ENCODE measurements at regions of chr6 and their contacts with region 1.

Region 1: GRCh38 chr6:134063966-134064445 is 11.6 kb upstream of the SLC2A12 start:
- DNase-seq: no peak
- H3K4me3 ChIP-seq: no peak overlapping the region
- H3K27ac ChIP-seq: no peak overlapping the region
- H3K4me1 ChIP-seq: peaks cover 2 to 12% (median 10%) of the 10 kb centered on the region in 4 experiments; a peak in 6 of 7 replicates
- H3K27me3 ChIP-seq: no peaks in the 10 kb centered on the region
- CTCF ChIP-seq: peak; percentile 61 to 97 (median 94)
- EP300 ChIP-seq: no peak
- POLR2A ChIP-seq: no peak
- RAD21 ChIP-seq: peak; percentile 75 to 83

Region 2: DNA sequence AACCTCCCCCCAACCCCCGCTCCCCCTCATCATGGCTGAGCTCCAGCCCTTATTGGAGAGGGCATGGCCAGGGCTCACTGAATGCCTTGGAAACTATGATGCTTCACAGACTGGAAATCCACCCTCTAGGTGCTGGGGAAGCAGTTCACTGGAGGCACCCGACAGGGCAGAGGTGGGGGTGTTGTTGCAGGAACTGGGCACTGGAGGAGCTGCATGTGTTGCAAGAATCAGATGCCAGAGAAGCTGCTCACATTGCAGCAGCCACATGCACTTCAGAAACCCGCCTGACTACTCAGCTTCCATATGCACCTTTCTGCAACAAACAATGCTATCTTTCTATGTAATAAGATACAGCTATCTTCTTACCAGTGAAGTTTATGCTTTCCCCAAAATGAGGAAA is 118.8 kb before region 1 on chr6:
- CTCF ChIA-PET with region 1: interaction called, 22 read pairs
- POLR2A ChIA-PET with region 1: no interaction called
- DNase-seq: no peak
- H3K4me3 ChIP-seq: no peak overlapping the region
- H3K27ac ChIP-seq: no peak overlapping the region
- H3K4me1 ChIP-seq: no peaks in the 10 kb centered on the region; a peak in 1 of 7 replicates
- H3K27me3 ChIP-seq: no peaks in the 10 kb centered on the region
- CTCF ChIP-seq: peak in 2 of 3 experiments; percentile 15 to 23; a peak in 2 of 4 replicates
- EP300 ChIP-seq: no peak
- POLR2A ChIP-seq: no peak
- RAD21 ChIP-seq: no peak

Region 3: GRCh38 chr6:133966654-133967329 is 97.2 kb before region 1 on chr6:
- CTCF ChIA-PET with region 1: interaction called, 50 read pairs
- POLR2A ChIA-PET with region 1: no interaction called
- DNase-seq: no peak
- H3K4me3 ChIP-seq: no peak overlapping the region
- H3K27ac ChIP-seq: no peak overlapping the region
- H3K4me1 ChIP-seq: peaks cover 0 to 3% (median 1%) of the 10 kb centered on the region in 4 experiments; a peak in 2 of 7 replicates
- H3K27me3 ChIP-seq: no peaks in the 10 kb centered on the region
- CTCF ChIP-seq: no peak
- EP300 ChIP-seq: no peak
- POLR2A ChIP-seq: no peak
- RAD21 ChIP-seq: no peak

Region 4: GRCh38 chr6:133991096-133991593 is 72.9 kb before region 1 on chr6:
- CTCF ChIA-PET with region 1: interaction called, 31 read pairs
- POLR2A ChIA-PET with region 1: interaction called, 4 read pairs
- DNase-seq: no peak
- H3K4me3 ChIP-seq: no peak overlapping the region
- H3K27ac ChIP-seq: no peak overlapping the region
- H3K4me1 ChIP-seq: peaks cover 0 to 6% (median 3%) of the 10 kb centered on the region in 4 experiments; a peak in 2 of 7 replicates
- H3K27me3 ChIP-seq: no peaks in the 10 kb centered on the region
- CTCF ChIP-seq: no peak
- EP300 ChIP-seq: no peak
- POLR2A ChIP-seq: no peak
- RAD21 ChIP-seq: no peak

Region 5: GRCh38 chr6:134021396-134022122 is 42.4 kb before region 1 on chr6:
- CTCF ChIA-PET with region 1: interaction called, 17 read pairs
- POLR2A ChIA-PET with region 1: interaction called, 4 read pairs
- DNase-seq: no peak
- H3K4me3 ChIP-seq: no peak overlapping the region
- H3K27ac ChIP-seq: no peak overlapping the region
- H3K4me1 ChIP-seq: 0 out of 7 replicates have a peak, but pooled peaks cover 0 to 2% (median 0%) of the 10 kb centered on the region in 4 experiments
- H3K27me3 ChIP-seq: no peaks in the 10 kb centered on the region; a peak in 1 of 7 replicates
- CTCF ChIP-seq: no peak
- EP300 ChIP-seq: no peak
- POLR2A ChIP-seq: no peak
- RAD21 ChIP-seq: no peak

Region 6: DNA sequence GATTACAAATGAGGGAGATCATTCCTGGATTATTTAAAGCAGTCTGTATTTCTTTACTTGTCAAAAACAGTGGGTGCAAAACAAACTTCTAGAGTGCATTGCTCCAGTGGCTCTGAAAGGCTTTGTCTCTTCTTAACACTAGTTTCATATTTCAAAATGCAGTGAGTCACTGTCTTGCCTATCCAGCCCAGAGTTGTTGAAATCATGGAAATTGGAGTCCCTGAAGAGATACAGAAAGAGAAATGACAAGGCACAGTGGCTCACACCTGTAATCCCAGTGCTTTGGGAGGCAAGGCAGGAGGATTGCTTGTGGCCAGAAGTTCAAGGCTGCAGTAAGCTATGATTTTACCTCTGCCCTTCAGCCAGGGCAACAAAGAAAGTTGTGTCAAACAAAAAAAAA is 22.9 kb before region 1 on chr6:
- CTCF ChIA-PET with region 1: interaction called, 144 read pairs
- POLR2A ChIA-PET with region 1: no interaction called
- DNase-seq: no peak
- H3K4me3 ChIP-seq: no peak overlapping the region
- H3K27ac ChIP-seq: no peak overlapping the region
- H3K4me1 ChIP-seq: peaks cover 0 to 2% (median 0%) of the 10 kb centered on the region in 4 experiments; a peak in 2 of 7 replicates
- H3K27me3 ChIP-seq: no peaks in the 10 kb centered on the region
- CTCF ChIP-seq: no peak
- EP300 ChIP-seq: no peak
- POLR2A ChIP-seq: no peak
- RAD21 ChIP-seq: no peak

Region 7: DNA sequence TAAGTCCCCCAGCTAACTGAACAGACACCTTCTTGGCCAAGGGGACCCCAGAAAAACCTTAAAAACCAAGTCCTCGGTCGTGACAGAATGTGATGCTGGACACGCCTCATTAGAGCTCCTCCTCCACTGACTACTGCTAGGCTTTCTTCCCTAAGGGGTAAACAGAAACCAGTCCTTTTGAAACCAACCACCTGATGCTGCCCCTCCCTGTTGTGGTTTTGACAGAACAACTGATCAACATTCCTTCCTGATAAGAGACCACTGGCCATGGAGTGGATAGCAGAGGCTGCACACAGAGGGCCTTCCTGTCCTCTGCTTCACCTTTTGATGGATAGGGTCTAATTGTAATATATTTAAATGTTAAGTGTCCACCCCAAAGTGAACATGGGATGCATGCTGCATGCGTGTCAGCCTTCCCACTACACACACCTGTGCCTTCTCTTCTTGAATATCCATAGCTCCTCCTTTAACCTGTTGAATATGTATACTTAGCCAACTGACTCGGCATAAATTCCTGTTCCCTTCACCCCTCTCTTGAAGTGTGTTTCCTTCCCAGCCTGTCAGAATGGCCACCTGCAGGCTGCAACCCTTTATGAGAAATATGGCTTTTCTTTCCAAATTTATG is 16.3 kb after region 1 on chr6:
- CTCF ChIA-PET with region 1: interaction called, 65 read pairs
- POLR2A ChIA-PET with region 1: interaction called, 4 read pairs
- DNase-seq: no peak
- H3K4me3 ChIP-seq: no peak overlapping the region
- H3K27ac ChIP-seq: no peak overlapping the region
- H3K4me1 ChIP-seq: no peaks in the 10 kb centered on the region
- H3K27me3 ChIP-seq: no peaks in the 10 kb centered on the region
- CTCF ChIP-seq: no peak
- EP300 ChIP-seq: no peak
- POLR2A ChIP-seq: no peak
- RAD21 ChIP-seq: no peak

Region 8: DNA sequence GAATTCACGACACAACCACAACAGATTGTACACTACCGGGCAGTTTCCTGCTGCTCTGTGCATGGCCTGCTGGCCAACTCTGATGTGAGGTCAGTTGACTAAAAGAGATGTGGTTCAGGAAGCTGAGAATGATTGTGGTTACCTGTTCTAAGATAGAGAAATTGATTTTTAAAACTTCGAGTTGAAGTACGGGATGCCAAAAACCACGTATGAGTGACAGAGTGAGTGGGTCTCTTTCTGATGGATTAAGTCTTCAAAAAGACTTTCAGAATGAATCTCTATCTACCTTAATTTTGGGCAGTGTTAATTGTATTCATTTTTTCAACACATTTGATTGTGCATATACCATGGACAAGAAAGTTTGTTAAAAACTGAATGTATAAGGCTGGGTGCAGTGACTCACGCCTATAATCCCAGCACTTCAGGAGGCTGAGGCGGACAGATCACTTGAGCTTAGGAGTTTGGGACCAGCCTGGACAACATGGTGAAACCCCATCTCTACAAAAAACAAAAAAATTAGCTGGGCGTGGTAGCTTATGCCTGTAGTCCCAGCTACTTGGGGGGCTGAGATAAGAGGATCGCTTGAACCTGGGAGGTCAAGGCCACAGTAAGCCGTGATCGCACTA is 132.7 kb after region 1 on chr6:
- CTCF ChIA-PET with region 1: no interaction called
- POLR2A ChIA-PET with region 1: no interaction called
- DNase-seq: no peak
- H3K4me3 ChIP-seq: no peak overlapping the region
- H3K27ac ChIP-seq: no peak overlapping the region
- H3K4me1 ChIP-seq: peaks cover 0 to 8% (median 3%) of the 10 kb centered on the region in 4 experiments; a peak in 2 of 7 replicates
- H3K27me3 ChIP-seq: no peaks in the 10 kb centered on the region
- CTCF ChIP-seq: no peak
- EP300 ChIP-seq: no peak
- POLR2A ChIP-seq: no peak
- RAD21 ChIP-seq: no peak

Measured in H1 (cell line).